ENCODE measurements at regions of chr13 and their contacts with region 1.

Region 1: GRCh38 chr13:101155920-101156319 is 260.4 kb downstream of the NALCN start:
- DNase-seq: no peak
- ATAC-seq: no peak
- H3K4me3 Mint-ChIP-seq: no peak overlapping the region
- H3K27ac Mint-ChIP-seq: no peak overlapping the region
- H3K4me1 Mint-ChIP-seq: no peaks in the 10 kb centered on the region
- H3K27me3 Mint-ChIP-seq: peaks cover 2% of the 10 kb centered on the region

Region 2: DNA sequence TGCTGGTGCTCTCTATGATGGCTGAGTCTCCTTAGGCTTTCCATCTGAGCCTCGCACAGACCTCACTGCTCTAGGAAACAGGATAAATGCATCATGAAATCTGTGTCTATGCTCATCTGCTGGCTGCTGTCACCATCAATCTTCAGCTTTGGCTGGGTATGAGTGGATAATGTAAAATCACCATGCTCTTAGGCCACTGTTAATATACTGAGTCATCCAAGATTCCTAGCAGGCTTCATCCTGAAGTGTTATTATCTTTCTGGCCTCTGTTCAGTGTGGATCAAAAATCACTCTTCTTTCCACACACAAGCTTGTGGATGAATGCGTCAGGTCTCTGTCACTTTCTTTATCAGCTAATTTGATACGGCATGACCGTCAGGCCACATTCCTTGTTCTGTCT is 57.0 kb before region 1 on chr13:
- CTCF ChIA-PET with region 1: no interaction called
- POLR2A ChIA-PET with region 1: no interaction called
- DNase-seq: no peak
- ATAC-seq: no peak
- H3K4me3 Mint-ChIP-seq: no peak overlapping the region
- H3K27ac Mint-ChIP-seq: no peak overlapping the region
- H3K4me1 Mint-ChIP-seq: no peaks in the 10 kb centered on the region
- H3K27me3 Mint-ChIP-seq: peaks cover 7% of the 10 kb centered on the region

Region 3: GRCh38 chr13:101144808-101145419 is 11.0 kb before region 1 on chr13:
- CTCF ChIA-PET with region 1: interaction called, 22 read pairs
- POLR2A ChIA-PET with region 1: no interaction called
- DNase-seq: peak; percentile 48
- ATAC-seq: peak; percentile 47
- H3K4me3 Mint-ChIP-seq: no peak overlapping the region
- H3K27ac Mint-ChIP-seq: no peak overlapping the region
- H3K4me1 Mint-ChIP-seq: no peaks in the 10 kb centered on the region
- H3K27me3 Mint-ChIP-seq: peaks cover 9% of the 10 kb centered on the region